Activated T-helper 1 cell treated with anti-CD3 and anti-CD28 coated beads, Interleukin-12 subunit alpha, Interleukin-12 subunit beta, Interleukin-2, Interleukin-4 antibody, amounts not matched to agents 30 ng/mL and 10 ng/mL and 1 ng/mL, durations not matched to agents 14 hours and 24 hours and 36 hours (primary cell): ENCODE measurements at regions of chr6 and their contacts with region 1.

Region 1: DNA sequence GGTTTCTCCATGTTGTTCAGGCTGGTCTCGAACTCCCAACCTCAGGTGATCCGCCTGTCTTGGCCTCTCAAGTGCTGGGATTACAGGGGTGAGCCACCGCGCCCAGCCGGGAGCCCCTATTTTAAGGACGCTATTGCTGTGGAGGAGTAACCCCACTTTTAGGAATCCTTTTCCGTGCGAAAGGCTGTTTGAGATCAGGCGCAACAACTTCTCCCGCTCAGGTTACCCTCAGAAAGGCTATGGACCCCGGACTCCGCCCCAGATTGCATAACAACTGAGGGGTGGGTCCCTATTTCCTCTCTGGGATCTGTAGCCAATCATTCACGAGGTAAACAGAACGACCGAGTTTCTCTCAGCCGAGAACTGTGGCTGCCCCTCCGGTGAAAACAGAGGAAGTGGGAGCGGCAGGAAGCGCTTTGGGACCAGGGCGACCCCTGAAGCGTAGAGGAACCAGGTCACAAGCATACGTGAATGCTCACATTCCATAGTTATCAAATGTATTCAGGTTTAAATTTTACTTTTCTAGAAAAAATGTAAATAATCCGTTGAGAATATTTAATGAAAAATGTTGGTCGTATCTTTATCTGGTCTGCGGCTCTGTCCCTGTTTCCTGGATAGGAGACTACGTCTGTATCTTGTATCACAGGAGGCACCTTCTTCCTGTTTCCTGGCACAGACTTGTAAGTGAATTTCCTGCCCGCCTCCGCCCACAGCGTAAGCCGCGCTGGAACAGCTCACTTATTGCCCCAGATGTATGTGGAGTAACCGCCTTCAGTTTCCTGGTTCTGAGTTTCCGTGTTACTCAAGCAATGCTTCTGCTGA is 26.8 kb downstream of the HLA-E start:
- DNase-seq: peak; percentile 88
- H3K4me3 Mint-ChIP-seq: peak overlapping the region; percentile 83
- H3K27ac Mint-ChIP-seq: peak overlapping the region; percentile 97
- H3K4me1 Mint-ChIP-seq: peaks cover 49% of the 10 kb centered on the region
- H3K27me3 Mint-ChIP-seq: no peaks in the 10 kb centered on the region

Region 2: DNA sequence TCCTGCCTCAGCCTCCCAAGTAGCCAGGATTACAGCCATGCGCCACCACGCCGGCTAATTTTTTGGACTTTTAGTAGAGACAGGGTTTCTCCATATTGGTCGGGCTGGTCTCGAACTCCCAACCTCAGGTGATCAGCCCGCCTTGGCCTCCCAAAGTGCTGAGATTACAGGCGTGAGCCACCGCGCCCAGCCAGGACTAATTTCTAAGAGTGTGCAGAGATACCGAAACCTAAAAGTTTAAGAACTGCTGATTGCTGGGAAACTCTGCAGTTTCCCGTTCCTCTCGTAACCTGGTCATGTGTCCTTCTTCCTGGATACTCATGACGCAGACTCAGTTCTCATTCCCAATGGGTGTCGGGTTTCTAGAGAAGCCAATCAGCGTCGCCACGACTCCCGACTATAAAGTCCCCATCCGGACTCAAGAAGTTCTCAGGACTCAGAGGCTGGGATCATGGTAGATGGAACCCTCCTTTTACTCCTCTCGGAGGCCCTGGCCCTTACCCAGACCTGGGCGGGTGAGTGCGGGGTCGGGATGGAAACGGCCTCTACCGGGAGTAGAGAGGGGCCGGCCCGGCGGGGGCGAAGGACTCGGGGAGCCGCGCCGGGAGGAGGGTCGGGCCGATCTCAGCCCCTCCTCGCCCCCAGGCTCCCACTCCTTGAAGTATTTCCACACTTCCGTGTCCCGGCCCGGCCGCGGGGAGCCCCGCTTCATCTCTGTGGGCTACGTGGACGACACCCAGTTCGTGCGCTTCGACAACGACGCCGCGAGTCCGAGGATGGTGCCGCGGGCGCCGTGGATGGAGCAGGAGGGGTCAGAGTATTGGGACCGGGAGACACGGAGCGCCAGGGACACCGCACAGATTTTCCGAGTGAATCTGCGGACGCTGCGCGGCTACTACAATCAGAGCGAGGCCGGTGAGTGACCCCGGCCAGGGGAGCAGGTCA is 26.8 kb before region 1 on chr6 and contains the start of gene HLA-E:
- intact Hi-C with region 1: loop called (anchors 1 kb)
- DNase-seq: peak; percentile 91
- H3K4me3 Mint-ChIP-seq: peak within 1 kb of the TSS; percentile 97
- H3K27ac Mint-ChIP-seq: peak within 1 kb of the TSS; percentile 99
- H3K4me1 Mint-ChIP-seq: peaks cover 64% of the 10 kb centered on the region
- H3K27me3 Mint-ChIP-seq: peaks cover 3% of the 10 kb centered on the region
- total RNA-seq, gene HLA-E: 476 and 483 TPM in 2 replicates

Region 3: GRCh38 chr6:30497714-30498113 is 18.4 kb before region 1 on chr6:
- intact Hi-C with region 1: loop called (anchors 2 kb)
- DNase-seq: no peak
- H3K4me3 Mint-ChIP-seq: no peak overlapping the region
- H3K27ac Mint-ChIP-seq: no peak overlapping the region
- H3K4me1 Mint-ChIP-seq: peaks cover 59% of the 10 kb centered on the region
- H3K27me3 Mint-ChIP-seq: no peaks in the 10 kb centered on the region